PC-3 (cell line): ENCODE measurements at regions of chr3 and their contacts with region 1.

Region 1: GRCh38 chr3:43162230-43163084 is 56.6 kb upstream of the POMGNT2 start:
- DNase-seq: peak; percentile 77
- ATAC-seq: peak; percentile 94
- H3K4me3 ChIP-seq: no peak overlapping the region
- H3K27ac ChIP-seq: peak overlapping the region; percentile 62
- H3K4me1 ChIP-seq: peaks cover 13% of the 10 kb centered on the region
- H3K27me3 ChIP-seq: no peaks in the 10 kb centered on the region
- CTCF ChIP-seq: peak; percentile 86

Region 2: GRCh38 chr3:43190666-43191065 is 28.2 kb after region 1 on chr3:
- CTCF ChIA-PET with region 1: interaction called, 5 read pairs
- POLR2A ChIA-PET with region 1: no interaction called
- intact Hi-C with region 1: loop called (anchors 1 kb)
- DNase-seq: peak; percentile 96
- ATAC-seq: peak; percentile 82
- H3K4me3 ChIP-seq: peak overlapping the region; percentile 23; the same call in 1 of the 2 replicates
- H3K27ac ChIP-seq: peak overlapping the region; percentile 96
- H3K4me1 ChIP-seq: peaks cover 39% of the 10 kb centered on the region
- H3K27me3 ChIP-seq: no peaks in the 10 kb centered on the region
- CTCF ChIP-seq: no peak

Region 3: GRCh38 chr3:43223670-43224364 is 61.4 kb after region 1 on chr3:
- CTCF ChIA-PET with region 1: interaction called, 14 read pairs
- POLR2A ChIA-PET with region 1: no interaction called
- intact Hi-C with region 1: no loop called
- DNase-seq: no peak
- ATAC-seq: peak; percentile 42; the same call in 1 of the 2 replicates
- H3K4me3 ChIP-seq: no peak overlapping the region
- H3K27ac ChIP-seq: no peak overlapping the region
- H3K4me1 ChIP-seq: no peaks in the 10 kb centered on the region
- H3K27me3 ChIP-seq: no peaks in the 10 kb centered on the region
- CTCF ChIP-seq: peak; percentile 54

Region 4: DNA sequence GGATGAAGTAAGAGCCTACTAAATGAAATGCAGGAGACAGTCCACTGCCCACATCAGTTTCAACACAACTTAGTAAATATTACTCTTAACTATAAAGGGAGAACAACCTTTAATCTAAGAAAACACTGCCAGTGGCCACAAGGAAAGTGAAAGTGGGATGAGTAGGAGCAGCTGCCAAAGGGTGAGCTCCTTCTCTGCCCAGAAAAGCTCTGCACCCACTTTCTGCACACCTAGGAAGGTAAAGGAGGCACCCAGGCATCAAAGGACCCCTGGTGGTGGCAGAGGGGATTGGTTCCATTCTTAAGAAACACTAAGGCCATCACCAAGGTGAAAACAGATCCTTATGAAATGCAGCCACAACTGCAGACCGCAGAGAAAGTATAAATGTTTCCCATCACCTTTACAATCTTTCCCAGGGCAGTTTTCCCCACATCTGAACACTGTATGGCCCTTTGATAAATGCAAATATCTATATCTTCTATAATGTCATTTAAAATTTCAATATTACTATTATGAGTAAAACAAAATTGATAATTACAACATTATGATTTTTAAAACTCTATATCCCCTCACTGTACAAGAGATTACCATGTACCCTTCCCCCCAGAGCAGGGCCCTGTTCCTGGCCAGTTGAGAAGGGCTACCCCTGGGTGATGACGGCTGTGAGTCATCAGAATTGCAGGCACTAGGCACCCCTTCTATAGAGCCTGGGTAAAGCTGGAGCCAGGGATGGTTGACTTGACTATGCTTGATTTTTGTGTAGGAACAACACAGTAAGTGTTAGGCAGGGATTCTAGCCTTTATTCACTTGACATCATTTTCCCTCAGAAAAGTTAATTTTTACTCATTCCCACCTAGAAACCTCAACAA is 215.8 kb after region 1 on chr3:
- CTCF ChIA-PET with region 1: interaction called, 4 read pairs
- POLR2A ChIA-PET with region 1: no interaction called
- intact Hi-C with region 1: loop called (anchors 1 kb)
- DNase-seq: peak; percentile 71
- ATAC-seq: peak; percentile 87
- H3K4me3 ChIP-seq: no peak overlapping the region
- H3K27ac ChIP-seq: no peak overlapping the region
- H3K4me1 ChIP-seq: peaks cover 5% of the 10 kb centered on the region; the same call in 1 of the 2 replicates
- H3K27me3 ChIP-seq: no peaks in the 10 kb centered on the region
- CTCF ChIP-seq: peak; percentile 81

Region 5: DNA sequence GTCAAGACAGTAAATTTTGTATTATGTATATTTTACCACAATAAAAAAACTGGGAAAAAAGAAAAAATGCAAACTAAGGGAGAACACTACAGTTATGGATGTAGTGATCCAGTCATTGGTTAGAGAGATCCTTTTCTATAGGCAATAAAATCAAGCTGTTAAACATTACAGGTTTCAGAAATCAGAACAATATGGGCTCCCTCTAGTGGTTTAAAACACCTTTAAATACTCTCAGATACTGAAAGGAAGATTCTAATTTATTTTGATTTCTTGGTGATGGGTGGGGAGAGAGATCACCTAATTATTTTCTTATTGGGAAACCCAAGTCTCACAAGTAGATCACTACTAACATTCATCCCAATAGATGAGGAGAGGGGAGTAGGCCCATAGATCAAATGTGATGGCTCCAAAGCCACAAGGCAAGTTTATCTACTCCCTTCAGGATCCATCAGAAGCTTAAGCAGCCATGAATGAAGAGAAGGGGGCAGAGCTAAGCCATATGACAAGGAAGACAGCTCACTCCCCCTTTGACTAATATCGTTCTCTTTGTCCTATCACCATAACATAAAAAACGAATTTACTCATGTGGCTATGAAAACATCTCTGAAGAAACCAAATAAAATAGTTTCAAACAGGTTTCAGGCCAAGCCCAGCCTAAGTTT is 340.7 kb after region 1 on chr3:
- CTCF ChIA-PET with region 1: interaction called, 16 read pairs
- POLR2A ChIA-PET with region 1: no interaction called
- intact Hi-C with region 1: loop called (anchors 1 kb)
- DNase-seq: peak; percentile 77
- ATAC-seq: peak; percentile 82
- H3K4me3 ChIP-seq: no peak overlapping the region
- H3K27ac ChIP-seq: peak overlapping the region; percentile 3; the same call in 1 of the 2 replicates
- H3K4me1 ChIP-seq: peaks cover 1% of the 10 kb centered on the region; the same call in 1 of the 2 replicates
- H3K27me3 ChIP-seq: no peaks in the 10 kb centered on the region
- CTCF ChIP-seq: peak; percentile 84